ENCODE measurements at regions of chr1 and their contacts with region 1.

Region 1: DNA sequence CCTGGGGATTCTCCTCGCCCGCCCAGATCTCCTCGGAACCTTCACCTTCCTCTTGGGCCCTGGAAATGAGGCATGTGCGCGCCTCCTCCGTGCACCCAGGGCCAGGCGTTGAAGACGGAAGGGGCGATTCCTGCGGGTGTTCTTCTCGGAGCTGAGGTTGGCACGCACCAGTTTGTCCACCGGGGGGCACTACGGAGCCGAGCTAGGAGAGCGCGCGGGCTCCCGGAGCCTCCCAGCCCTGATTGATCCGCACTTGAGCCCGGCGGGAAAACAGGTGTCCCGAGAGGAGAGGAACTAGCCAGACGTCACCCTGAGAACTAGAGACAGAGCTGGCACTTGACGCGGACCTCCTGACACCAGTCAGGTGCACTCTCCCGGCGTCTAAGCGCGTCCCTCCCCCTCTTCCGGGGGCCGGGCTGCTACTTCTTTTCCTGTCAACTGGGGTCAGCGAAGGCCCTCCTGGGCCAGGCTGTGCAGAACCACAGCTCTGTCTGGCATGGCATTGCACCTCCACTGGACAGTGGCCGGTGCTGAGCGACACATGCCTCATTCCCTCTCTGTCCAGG is 18.3 kb upstream of the SERINC2 start:
- DNase-seq: peak; percentile 71 to 78
- H3K4me3 ChIP-seq: no peak overlapping the region
- H3K4me3 Mint-ChIP-seq: peak overlapping the region; percentile 63
- H3K27ac Mint-ChIP-seq: no peak overlapping the region
- H3K4me1 ChIP-seq: peaks cover 32% of the 10 kb centered on the region
- H3K4me1 Mint-ChIP-seq: peaks cover 14% of the 10 kb centered on the region
- H3K27me3 ChIP-seq: no peaks in the 10 kb centered on the region
- H3K27me3 Mint-ChIP-seq: no peaks in the 10 kb centered on the region
- CTCF ChIP-seq: peak; percentile 32 to 58

Region 2: DNA sequence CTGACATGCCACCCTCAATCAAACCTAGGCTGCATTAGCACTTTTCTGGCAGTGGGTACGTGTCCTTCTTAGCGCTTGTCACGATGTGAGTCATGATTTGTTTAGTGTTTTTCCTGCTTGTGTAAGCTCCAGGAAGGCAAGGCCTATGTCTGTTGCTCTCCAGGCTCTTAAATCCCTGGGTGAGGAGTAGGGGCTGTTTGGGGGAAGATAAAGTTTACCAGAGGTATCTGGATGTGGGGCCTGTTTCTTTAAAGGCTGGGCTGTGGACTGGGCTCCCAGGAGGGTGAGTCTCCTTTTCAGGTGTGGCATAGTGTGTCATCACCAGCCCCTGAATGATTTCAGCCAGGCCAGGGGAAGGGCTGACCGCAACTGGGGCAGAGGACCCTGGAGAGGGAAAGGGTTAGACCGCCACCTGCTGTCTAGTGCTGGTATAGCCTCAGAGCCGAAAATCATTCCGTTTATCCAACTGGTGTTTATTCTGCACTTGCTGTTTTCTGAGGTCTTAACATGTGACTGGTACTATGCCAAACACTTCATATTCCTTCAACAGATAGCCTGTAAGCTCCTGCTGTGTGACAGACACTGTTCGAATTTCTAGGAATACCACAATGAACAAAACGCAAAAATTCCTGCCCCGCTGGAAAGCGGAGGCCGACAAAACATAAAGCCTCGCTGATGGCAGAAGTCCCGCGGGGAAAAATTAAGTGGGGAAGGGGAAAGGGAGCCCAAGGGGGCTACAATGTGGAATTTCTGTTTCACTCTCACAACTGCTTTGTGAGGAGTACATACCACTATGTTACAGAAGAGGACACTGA is 28.0 kb after region 1 on chr1:
- CTCF ChIA-PET with region 1: interaction called, 14 read pairs
- POLR2A ChIA-PET with region 1: no interaction called
- intact Hi-C with region 1: loop called (anchors 1 kb)
- DNase-seq: peak; percentile 70 to 77
- H3K4me3 ChIP-seq: no peak overlapping the region
- H3K4me3 Mint-ChIP-seq: no peak overlapping the region
- H3K27ac Mint-ChIP-seq: peak overlapping the region; percentile 82
- H3K4me1 ChIP-seq: peaks cover 3% of the 10 kb centered on the region; the same call in 1 of the 2 replicates
- H3K4me1 Mint-ChIP-seq: no peaks in the 10 kb centered on the region
- H3K27me3 ChIP-seq: no peaks in the 10 kb centered on the region
- H3K27me3 Mint-ChIP-seq: no peaks in the 10 kb centered on the region
- CTCF ChIP-seq: peak; percentile 71 to 78

Region 3: GRCh38 chr1:31523769-31524168 is 129.1 kb after region 1 on chr1:
- CTCF ChIA-PET with region 1: no interaction called
- POLR2A ChIA-PET with region 1: no interaction called
- intact Hi-C with region 1: no loop called
- DNase-seq: no peak
- H3K4me3 ChIP-seq: no peak overlapping the region
- H3K4me3 Mint-ChIP-seq: no peak overlapping the region
- H3K27ac Mint-ChIP-seq: no peak overlapping the region
- H3K4me1 ChIP-seq: no peaks in the 10 kb centered on the region
- H3K4me1 Mint-ChIP-seq: peaks cover 12% of the 10 kb centered on the region
- H3K27me3 ChIP-seq: no peaks in the 10 kb centered on the region
- H3K27me3 Mint-ChIP-seq: no peaks in the 10 kb centered on the region
- CTCF ChIP-seq: no peak